Ascending aorta (tissue), 2 donors: ENCODE measurements at regions of chr19 and their contacts with region 1.

Region 1: DNA sequence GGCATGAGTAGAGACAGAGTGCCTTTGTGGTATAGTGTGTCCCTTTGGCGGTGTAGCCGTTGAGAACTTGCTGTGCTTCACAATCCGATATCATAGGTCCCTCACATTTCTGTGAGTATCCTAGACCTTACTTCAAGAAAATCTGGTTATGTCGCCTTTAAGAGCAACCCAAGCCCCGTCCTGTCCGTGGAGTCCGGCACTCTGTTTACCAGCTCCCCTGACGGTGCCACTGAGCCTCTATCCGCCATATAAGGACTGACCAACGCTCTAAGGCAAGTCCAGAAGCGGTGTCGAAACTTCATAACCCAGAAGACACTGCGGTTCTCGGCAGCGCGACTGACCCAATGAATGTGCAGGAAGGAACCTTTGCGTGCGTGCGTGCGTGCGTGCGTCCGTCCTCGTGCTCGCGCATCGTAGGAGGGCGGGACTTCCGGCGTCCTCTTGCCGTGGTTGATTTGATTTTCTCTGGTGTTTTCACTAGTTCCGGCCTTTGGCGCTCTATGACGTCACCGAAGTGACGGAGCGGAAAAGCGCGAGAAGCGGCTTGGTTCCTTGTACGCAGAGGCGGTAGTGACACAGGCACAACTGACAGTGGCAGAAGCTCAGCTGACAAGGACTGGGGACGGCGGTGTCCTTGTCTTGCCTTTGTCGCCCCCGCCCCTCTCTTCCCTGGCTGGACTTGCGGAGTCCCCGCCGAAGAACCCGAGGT is at the starts of genes TRAPPC2B and ZNF547:
- DNase-seq: peak; percentile 99 to 100
- H3K4me3 ChIP-seq: peak within 1 kb of the TSS; percentile 79 to 87
- H3K27ac ChIP-seq: peak within 1 kb of the TSS; percentile 95
- H3K4me1 ChIP-seq: no peaks in the 10 kb centered on the region
- H3K27me3 ChIP-seq: no peaks in the 10 kb centered on the region
- CTCF ChIP-seq: no peak
- total RNA-seq, gene TRAPPC2B: 1.8 TPM
- total RNA-seq, gene ZNF547: not detected

Region 2: DNA sequence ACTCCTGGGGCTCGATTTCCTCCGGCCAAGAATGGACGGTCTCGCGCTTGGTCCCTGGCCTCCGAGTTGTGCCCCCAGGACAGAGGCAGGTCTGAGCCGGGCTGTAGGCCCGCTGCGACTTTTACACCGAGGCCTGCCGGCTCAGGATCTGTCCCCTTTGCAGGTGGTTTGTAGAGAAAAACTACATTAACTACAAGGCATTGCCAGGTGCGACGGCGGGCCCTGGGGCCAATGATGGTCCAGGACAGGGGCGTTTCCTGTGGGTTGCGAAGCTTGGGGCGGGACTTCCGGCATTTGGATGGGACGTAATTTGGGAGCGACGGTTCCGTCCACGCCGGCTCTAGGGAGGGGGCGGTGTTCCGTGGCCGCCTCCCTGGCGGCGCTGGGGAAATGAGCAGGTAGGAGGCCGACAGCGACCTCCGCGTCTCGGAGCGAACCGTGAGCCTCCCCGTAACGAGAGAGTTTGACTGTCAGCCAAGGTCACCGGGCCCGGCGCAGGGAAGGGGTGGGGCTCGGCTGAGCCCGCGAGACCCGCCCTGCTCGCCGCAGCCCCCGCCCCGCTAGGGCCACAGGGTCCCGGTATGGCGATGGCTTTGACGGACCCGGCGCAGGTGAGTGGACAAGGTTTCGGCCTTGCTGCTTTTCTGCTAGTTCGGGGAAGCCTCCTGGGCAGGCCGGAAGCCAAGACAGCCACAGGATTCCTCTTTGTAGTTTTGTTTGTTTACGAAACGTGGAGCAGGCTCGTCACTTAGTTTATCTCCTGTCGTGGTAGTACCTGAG is 122.7 kb before region 1 on chr19 and contains the start of gene ZNF805:
- intact Hi-C with region 1: loop called (anchors 1 kb)
- DNase-seq: peak; percentile 80 to 97
- H3K4me3 ChIP-seq: peak within 1 kb of the TSS; percentile 84 to 91
- H3K27ac ChIP-seq: peak within 1 kb of the TSS; percentile 87 to 97
- H3K4me1 ChIP-seq: peaks cover 0 to 8% of the 10 kb centered on the region in 2 donors
- H3K27me3 ChIP-seq: no peaks in the 10 kb centered on the region
- CTCF ChIP-seq: peak in 1 of 3 experiments; percentile 13
- total RNA-seq, gene ZNF805: 22.8 TPM

Region 3: GRCh38 chr19:57320180-57321084 is 42.7 kb before region 1 on chr19 and contains the start of gene ZNF543:
- intact Hi-C with region 1: loop called (anchors 1 kb)
- DNase-seq: peak; percentile 82 to 95
- H3K4me3 ChIP-seq: peak within 1 kb of the TSS; percentile 65 to 69
- H3K27ac ChIP-seq: peak within 1 kb of the TSS; percentile 82 to 87
- H3K4me1 ChIP-seq: peaks cover 0 to 6% of the 10 kb centered on the region in 2 donors
- H3K27me3 ChIP-seq: no peaks in the 10 kb centered on the region
- CTCF ChIP-seq: no peak
- total RNA-seq, gene ZNF543: 4.5 TPM

Region 4: DNA sequence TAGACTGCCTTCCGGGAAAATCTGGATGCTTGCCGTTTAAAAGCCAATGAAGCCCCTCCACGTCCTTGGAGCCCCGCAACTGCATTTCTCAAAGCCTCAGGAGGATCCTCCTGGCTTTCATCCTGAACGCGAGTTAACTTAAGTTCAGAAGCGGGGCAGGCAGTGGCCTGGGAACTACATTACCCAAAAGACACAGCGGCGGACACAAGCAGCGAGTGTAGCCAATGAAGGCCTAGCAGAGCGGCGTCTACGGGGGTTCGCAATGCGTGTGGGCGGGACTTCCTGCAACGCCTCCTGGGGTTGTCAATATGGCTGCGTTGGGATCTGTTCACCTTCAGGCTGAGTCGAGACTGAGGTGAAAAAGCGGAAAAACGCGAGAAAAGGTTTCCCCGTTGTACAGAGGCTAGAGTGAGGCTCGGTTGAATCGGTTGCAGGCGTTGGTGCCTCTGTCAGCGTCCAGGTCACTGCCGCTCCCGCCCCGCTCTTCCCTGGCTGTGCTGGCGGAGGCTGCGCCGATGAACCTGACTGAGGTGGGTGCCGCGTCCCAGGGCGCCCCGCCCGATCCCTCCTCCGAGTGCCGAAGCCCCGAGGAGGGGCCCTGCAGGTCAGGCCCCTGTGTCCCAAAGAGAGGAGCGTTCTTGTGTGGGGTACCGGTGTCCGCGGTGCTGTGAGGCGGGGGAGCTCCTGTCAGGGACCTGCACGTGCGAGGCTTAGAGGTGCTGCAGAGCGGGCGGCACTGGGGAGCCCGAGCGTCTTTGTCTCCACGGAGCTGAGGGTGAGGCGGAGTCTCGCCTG is 47.9 kb after region 1 on chr19 and contains the start of gene ZNF17:
- intact Hi-C with region 1: loop called (anchors 1 kb)
- DNase-seq: peak; percentile 80 to 96
- H3K4me3 ChIP-seq: peak within 1 kb of the TSS; percentile 65 to 87
- H3K27ac ChIP-seq: peak within 1 kb of the TSS; percentile 63 to 71
- H3K4me1 ChIP-seq: no peaks in the 10 kb centered on the region
- H3K27me3 ChIP-seq: no peaks in the 10 kb centered on the region
- CTCF ChIP-seq: no peak
- total RNA-seq, gene ZNF17: 1.5 TPM

Region 5: DNA sequence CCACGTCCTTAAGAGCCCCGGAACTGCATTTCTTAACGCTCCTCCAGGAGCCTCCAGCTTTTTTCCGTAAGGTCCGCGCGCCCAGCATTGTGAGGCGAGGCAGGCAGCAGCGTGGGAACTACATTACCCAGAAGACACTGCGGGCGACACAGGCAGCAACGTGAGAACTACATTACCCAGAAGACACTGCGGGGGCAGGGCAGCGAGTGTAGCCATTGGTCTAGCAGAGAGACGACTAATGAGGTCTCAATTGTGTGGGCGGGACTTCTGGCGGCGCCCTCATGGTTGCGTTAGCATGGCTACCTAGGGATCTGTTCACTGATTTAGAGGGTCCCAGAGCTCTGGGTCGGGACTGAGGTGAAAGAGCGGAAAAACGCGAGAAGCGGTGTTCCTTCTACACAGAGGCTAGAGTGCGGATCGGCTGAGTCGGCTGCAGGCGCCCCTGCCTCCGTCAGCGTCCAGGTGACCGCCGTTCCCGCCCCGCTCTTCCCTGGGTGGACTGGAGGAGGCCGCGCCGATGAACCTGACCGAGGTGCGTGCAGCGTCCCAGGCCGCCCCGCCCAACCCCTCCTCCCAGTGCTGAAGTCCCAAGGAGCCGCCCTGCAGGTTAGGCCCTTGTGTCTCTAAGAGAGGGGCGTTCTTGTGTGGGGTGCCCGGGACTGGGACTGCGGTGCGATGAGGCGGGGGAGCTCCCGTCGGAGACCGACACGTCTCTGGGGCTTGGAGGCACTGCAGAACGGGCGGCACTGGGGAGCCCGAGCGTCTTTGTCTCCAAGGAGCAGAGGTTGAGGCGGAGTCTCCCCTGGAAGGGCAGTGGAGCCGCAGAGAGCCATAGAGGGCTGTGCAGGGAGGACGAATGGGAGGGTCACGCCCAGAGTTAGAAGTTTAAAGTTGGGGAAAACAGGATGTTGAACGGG is 72.2 kb after region 1 on chr19 and contains the start of gene ZNF749:
- intact Hi-C with region 1: loop called (anchors 2 kb)
- DNase-seq: peak; percentile 98 to 99
- H3K4me3 ChIP-seq: peak within 1 kb of the TSS; percentile 84 to 85
- H3K27ac ChIP-seq: no peak within 1 kb of the TSS
- H3K4me1 ChIP-seq: peaks cover 5 to 9% of the 10 kb centered on the region in 2 donors
- H3K27me3 ChIP-seq: no peaks in the 10 kb centered on the region
- CTCF ChIP-seq: no peak
- total RNA-seq, gene ZNF749: 2.7 TPM

Region 6: DNA sequence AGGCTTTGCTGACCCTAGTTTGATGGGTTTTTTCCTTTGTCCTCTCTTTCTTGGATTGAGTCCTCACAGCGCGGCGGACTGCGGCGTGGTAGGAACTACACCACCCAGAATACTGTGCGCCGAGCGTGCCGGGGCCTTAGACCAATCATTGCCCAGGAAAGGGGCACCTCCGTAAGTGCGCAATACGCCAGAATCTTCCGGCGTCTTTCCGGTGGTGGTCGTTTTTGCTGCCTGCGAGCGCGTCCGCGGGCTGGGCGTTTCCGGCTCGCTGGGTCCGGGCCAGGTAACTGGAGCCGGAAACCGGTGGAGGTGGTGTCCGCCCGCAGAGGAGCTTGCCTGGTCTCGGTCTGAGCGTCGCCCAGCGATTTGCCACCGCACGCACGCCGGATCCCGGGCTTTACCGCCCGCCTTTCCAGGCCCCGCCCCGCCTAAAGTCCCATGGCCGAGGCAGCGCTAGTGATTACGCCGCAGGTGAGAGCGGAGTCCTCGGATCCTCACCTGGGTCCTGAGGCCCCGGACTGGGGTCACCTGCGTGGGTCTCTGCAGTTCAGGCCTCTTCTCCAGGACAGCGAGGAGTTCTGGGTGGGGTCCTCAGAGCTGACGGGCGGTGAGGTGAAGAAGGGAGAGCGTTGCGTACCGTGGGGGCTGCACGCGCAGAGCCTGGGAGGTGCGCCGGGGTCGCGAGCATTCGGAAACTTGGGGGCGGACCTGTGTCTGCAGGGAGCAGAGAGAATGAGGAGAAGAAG is 164.2 kb after region 1 on chr19 and contains the start of gene ZNF549:
- intact Hi-C with region 1: loop called (anchors 2 kb)
- DNase-seq: peak; percentile 63 to 94
- H3K4me3 ChIP-seq: peak within 1 kb of the TSS; percentile 81 to 85
- H3K27ac ChIP-seq: peak within 1 kb of the TSS; percentile 64 to 74
- H3K4me1 ChIP-seq: peaks cover 2 to 3% of the 10 kb centered on the region in 2 donors
- H3K27me3 ChIP-seq: no peaks in the 10 kb centered on the region
- CTCF ChIP-seq: no peak
- total RNA-seq, gene ZNF549: 2.2 TPM

Region 7: GRCh38 chr19:58581227-58582151 is 1218.3 kb after region 1 on chr19:
- intact Hi-C with region 1: no loop called
- DNase-seq: peak; percentile 49 to 92
- H3K4me3 ChIP-seq: no peak overlapping the region
- H3K27ac ChIP-seq: peak overlapping the region; percentile 47 to 51
- H3K4me1 ChIP-seq: peaks cover 0 to 8% of the 10 kb centered on the region in 2 donors
- H3K27me3 ChIP-seq: no peaks in the 10 kb centered on the region
- CTCF ChIP-seq: peak; percentile 87 to 93 (median 88)